ENCODE measurements at regions of chr6 and their contacts with region 1.

Region 1: DNA sequence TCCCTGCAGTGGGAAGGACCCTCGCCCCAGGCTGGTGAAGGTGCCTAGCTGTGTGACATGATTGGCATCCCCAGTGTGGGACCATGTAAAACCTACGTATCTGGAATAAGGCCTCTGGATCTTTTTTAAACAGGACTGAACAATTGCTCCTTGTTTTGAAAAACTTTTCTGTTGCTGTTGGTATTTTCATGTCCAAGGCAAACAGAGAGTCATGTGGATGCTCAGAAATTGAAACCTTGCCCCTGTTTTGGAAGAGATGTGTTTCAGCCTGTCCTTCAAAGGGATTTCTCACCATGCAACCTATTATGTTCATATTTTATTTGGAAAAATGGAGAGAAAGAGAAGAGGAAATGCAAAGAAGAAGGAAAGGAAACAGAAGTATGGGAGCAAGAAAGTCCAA is 362.3 kb downstream of the PKHD1 start:
- DNase-seq: no peak
- ATAC-seq: peak; percentile 84

Region 2: DNA sequence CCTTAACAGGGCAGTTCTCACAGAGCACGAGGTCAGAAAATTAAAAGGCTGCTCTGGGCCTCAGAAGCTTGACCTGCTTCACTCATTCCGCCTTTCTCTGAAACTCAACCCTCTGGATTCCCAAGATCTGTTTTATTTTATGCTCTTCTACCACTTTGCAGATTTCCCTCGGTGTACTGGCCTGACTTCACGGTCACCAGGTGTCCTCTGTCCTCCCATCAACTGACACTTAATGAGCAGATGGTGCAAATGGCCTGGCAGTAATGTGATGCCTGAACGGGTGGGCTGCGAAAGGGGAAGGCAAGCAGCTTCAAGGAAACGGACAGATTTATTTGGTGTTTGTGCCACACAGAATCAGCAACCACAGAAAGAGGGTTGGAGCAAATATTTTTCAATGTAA is 1181.5 kb before region 1 on chr6:
- intact Hi-C with region 1: no loop called
- DNase-seq: no peak
- ATAC-seq: no peak

Region 3: DNA sequence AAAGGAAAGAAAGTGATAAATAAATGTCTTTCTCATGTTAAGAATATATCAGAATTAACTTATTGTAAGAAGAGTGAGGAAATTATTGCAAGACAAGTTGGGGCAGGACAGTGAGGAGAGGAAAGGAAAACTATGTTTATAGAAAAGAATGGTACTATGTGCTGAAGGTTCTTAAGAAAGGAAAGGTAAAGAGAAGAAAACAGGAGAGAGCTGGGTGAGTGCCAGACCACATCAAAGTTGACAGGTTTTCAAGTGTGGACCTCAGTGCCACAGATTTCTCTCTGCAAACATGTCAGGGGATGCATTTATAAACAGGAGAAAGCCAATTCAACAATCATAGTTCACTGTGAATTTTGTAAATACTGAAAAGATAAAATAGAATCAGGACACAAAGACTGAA is 76.9 kb before region 1 on chr6:
- intact Hi-C with region 1: no loop called
- DNase-seq: no peak
- ATAC-seq: no peak

Region 4: DNA sequence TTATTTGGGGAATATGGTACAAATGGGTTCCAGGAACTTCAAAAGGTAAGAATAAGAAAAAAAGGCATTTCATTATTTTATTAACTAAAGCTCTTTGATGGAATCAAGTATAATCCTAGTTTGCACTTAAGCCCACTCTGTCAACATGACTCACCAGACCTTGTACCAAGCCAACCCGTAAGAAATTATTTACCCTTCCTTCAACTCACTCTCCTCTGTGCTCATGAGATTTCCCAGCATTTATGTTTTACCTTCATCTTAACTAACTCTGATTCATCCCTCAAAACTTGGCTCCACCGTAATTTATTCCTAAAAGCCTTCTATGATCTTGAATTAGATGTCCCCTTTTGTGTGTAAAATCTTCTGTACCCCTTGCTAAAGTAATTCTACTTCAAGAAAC is 53.5 kb after region 1 on chr6:
- intact Hi-C with region 1: loop called (anchors 10 kb)
- DNase-seq: no peak
- ATAC-seq: no peak

Measured in sciatic nerve (tissue), 2 donors.